Activated T-helper 2 cell treated with anti-CD3 and anti-CD28 coated beads, Interferon-gamma antibody, Interleukin-2, Interleukin-4, amounts not matched to agents 10 μg/mL and 5 μg/mL and 100 μg/mL, durations not matched to agents 14 hours and 24 hours and 36 hours (primary cell): ENCODE measurements at regions of chr6 and their contacts with region 1.

Region 1: GRCh38 chr6:25942561-25943147 is 12.2 kb upstream of the SLC17A2 start:
- DNase-seq: no peak
- H3K4me3 Mint-ChIP-seq: no peak overlapping the region
- H3K27ac Mint-ChIP-seq: no peak overlapping the region
- H3K4me1 Mint-ChIP-seq: peaks cover 41% of the 10 kb centered on the region
- H3K27me3 Mint-ChIP-seq: peaks cover 2% of the 10 kb centered on the region

Region 2: DNA sequence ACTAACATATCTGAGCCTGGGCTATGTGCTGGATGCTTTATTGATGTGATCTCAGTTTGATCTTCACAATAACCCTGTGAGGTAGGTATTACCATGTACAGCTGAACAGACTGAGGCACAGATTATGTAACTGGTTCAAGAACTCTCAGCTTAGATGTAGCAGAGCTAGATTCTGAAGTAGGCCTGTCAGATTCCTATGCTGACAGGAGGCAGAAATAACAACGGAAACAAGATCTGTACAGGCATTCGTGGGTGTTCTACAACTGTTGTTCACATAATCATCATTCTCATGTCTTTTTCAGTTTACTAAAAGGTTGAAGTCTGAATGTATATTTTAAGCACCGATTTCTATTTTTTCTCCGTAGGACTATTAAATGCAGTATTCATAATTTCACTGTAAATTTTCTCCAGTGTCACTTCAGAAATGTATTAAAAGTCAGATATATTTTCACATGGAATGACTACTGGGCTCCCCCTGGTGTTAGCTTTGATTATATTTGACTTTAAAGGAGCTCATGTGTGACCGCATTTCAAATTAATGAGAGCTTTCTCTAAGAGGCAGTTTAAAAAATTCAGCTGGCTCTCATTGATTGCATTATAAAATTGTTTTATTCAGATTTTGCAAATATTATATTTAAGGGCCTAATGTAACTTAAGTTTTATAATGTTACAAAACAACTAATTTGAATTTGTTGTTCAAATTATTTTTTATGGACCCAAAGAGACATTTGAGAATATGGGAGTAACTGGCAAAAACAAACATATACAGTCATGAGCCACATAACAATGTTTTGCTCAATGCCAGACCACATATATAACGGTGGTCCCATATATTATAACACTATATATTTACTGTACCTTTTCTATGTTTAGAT is 224.6 kb before region 1 on chr6:
- intact Hi-C with region 1: loop called (anchors 1 kb)
- DNase-seq: no peak
- H3K4me3 Mint-ChIP-seq: no peak overlapping the region
- H3K27ac Mint-ChIP-seq: no peak overlapping the region
- H3K4me1 Mint-ChIP-seq: peaks cover 2% of the 10 kb centered on the region
- H3K27me3 Mint-ChIP-seq: peaks cover 10% of the 10 kb centered on the region

Region 3: GRCh38 chr6:25788305-25788922 is 154.2 kb before region 1 on chr6:
- intact Hi-C with region 1: loop called (anchors 1 kb)
- DNase-seq: peak; percentile 17
- H3K4me3 Mint-ChIP-seq: no peak overlapping the region
- H3K27ac Mint-ChIP-seq: peak overlapping the region; percentile 2
- H3K4me1 Mint-ChIP-seq: peaks cover 21% of the 10 kb centered on the region
- H3K27me3 Mint-ChIP-seq: no peaks in the 10 kb centered on the region

Region 4: GRCh38 chr6:25816252-25816651 is 126.4 kb before region 1 on chr6:
- intact Hi-C with region 1: no loop called
- DNase-seq: no peak
- H3K4me3 Mint-ChIP-seq: no peak overlapping the region
- H3K27ac Mint-ChIP-seq: no peak overlapping the region
- H3K4me1 Mint-ChIP-seq: peaks cover under 1% of the 10 kb centered on the region
- H3K27me3 Mint-ChIP-seq: peaks cover 6% of the 10 kb centered on the region

Region 5: GRCh38 chr6:25874822-25875562 is 67.7 kb before region 1 on chr6:
- intact Hi-C with region 1: loop called (anchors 5 kb)
- DNase-seq: no peak
- H3K4me3 Mint-ChIP-seq: peak overlapping the region; percentile 14
- H3K27ac Mint-ChIP-seq: peak overlapping the region; percentile 30
- H3K4me1 Mint-ChIP-seq: peaks cover 52% of the 10 kb centered on the region
- H3K27me3 Mint-ChIP-seq: no peaks in the 10 kb centered on the region

Region 6: GRCh38 chr6:25962149-25963127 is 19.8 kb after region 1 on chr6 and contains the start of gene TRIM38:
- intact Hi-C with region 1: loop called (anchors 1 kb)
- DNase-seq: peak; percentile 77
- H3K4me3 Mint-ChIP-seq: peak within 1 kb of the TSS; percentile 99
- H3K27ac Mint-ChIP-seq: peak within 1 kb of the TSS; percentile 98
- H3K4me1 Mint-ChIP-seq: peaks cover 59% of the 10 kb centered on the region
- H3K27me3 Mint-ChIP-seq: no peaks in the 10 kb centered on the region
- total RNA-seq, gene TRIM38: 29.2 and 29.5 TPM in 2 replicates

Region 7: DNA sequence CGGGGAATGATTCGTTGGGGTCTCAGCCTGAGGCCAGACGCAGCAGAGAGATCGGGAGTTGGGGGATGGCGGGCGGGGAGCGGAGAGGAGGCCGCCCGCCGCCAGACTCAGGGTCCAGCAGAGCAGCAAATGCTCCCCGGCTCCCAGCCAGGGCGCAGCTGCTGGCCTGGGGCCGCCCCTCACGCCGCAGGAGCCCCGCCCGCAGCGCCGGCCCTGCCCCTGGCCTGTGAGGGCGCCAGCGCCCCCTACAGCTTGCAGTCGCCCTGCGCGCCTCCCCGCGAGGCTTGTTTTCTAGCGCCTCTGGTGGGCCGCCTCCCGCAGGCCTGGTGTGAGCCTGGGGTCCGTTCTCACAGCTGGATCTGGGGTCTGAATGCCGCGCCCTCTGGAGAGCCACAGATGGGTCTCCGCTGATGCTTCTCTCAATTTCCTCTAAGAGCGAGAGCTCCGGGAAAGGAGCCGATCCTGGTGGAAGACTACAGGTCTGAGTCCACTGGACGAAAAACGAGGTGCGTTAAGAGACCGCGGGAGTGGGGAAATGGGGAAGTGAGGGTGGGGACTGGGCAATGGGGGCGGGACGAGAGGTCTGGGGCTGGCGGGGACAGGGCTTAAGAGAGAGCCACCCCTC is 49.9 kb after region 1 on chr6:
- intact Hi-C with region 1: loop called (anchors 5 kb)
- DNase-seq: peak; percentile 92
- H3K4me3 Mint-ChIP-seq: peak overlapping the region; percentile 97
- H3K27ac Mint-ChIP-seq: peak overlapping the region; percentile 96
- H3K4me1 Mint-ChIP-seq: peaks cover 28% of the 10 kb centered on the region
- H3K27me3 Mint-ChIP-seq: no peaks in the 10 kb centered on the region